Activated CD4-positive, alpha-beta memory T cell treated with anti-CD3 and anti-CD28 coated beads for 36 hours (primary cell): ENCODE measurements at regions of chr7 and their contacts with region 1.

Region 1: GRCh38 chr7:150668472-150668911 is 17.0 kb upstream of the GIMAP2 start:
- DNase-seq: peak; percentile 81
- H3K4me3 Mint-ChIP-seq: peak overlapping the region; percentile 18
- H3K27ac Mint-ChIP-seq: peak overlapping the region; percentile 98
- H3K4me1 Mint-ChIP-seq: peaks cover 82% of the 10 kb centered on the region
- H3K27me3 Mint-ChIP-seq: no peaks in the 10 kb centered on the region

Region 2: GRCh38 chr7:150567169-150567568 is 101.3 kb before region 1 on chr7 and contains the start of gene GIMAP4:
- CTCF ChIA-PET with region 1: interaction called, 7 read pairs
- POLR2A ChIA-PET with region 1: no interaction called
- intact Hi-C with region 1: loop called (anchors 2 kb)
- DNase-seq: peak; percentile 55
- H3K4me3 Mint-ChIP-seq: peak within 1 kb of the TSS; percentile 94
- H3K27ac Mint-ChIP-seq: peak within 1 kb of the TSS; percentile 98
- H3K4me1 Mint-ChIP-seq: peaks cover 65% of the 10 kb centered on the region
- H3K27me3 Mint-ChIP-seq: no peaks in the 10 kb centered on the region
- total RNA-seq, gene GIMAP4: 128 to 140 TPM

Region 3: GRCh38 chr7:150631866-150632864 is 36.3 kb before region 1 on chr7 and contains the start of gene GIMAP6:
- CTCF ChIA-PET with region 1: interaction called, 3 read pairs
- POLR2A ChIA-PET with region 1: interaction called, 3 read pairs
- intact Hi-C with region 1: loop called (anchors 2 kb)
- DNase-seq: peak; percentile 62
- H3K4me3 Mint-ChIP-seq: peak within 1 kb of the TSS; percentile 93
- H3K27ac Mint-ChIP-seq: peak within 1 kb of the TSS; percentile 97
- H3K4me1 Mint-ChIP-seq: peaks cover 76% of the 10 kb centered on the region
- H3K27me3 Mint-ChIP-seq: no peaks in the 10 kb centered on the region
- total RNA-seq, gene GIMAP6: 28.9 to 30.2 TPM

Region 4: GRCh38 chr7:150648353-150649079 is 20.0 kb before region 1 on chr7:
- CTCF ChIA-PET with region 1: no interaction called
- POLR2A ChIA-PET with region 1: no interaction called
- intact Hi-C with region 1: loop called (anchors 2 kb)
- DNase-seq: no peak
- H3K4me3 Mint-ChIP-seq: no peak overlapping the region
- H3K27ac Mint-ChIP-seq: peak overlapping the region; percentile 48
- H3K4me1 Mint-ChIP-seq: peaks cover 30% of the 10 kb centered on the region
- H3K27me3 Mint-ChIP-seq: no peaks in the 10 kb centered on the region

Region 5: GRCh38 chr7:150685219-150686029 is 16.9 kb after region 1 on chr7 and contains the start of gene GIMAP2:
- CTCF ChIA-PET with region 1: interaction called, 10 read pairs
- POLR2A ChIA-PET with region 1: interaction called, 8 read pairs
- intact Hi-C with region 1: loop called (anchors 1 kb)
- DNase-seq: peak; percentile 40
- H3K4me3 Mint-ChIP-seq: peak within 1 kb of the TSS; percentile 98
- H3K27ac Mint-ChIP-seq: peak within 1 kb of the TSS; percentile 99
- H3K4me1 Mint-ChIP-seq: peaks cover 77% of the 10 kb centered on the region
- H3K27me3 Mint-ChIP-seq: no peaks in the 10 kb centered on the region
- total RNA-seq, gene GIMAP2: 38.8 to 44.1 TPM

Region 6: DNA sequence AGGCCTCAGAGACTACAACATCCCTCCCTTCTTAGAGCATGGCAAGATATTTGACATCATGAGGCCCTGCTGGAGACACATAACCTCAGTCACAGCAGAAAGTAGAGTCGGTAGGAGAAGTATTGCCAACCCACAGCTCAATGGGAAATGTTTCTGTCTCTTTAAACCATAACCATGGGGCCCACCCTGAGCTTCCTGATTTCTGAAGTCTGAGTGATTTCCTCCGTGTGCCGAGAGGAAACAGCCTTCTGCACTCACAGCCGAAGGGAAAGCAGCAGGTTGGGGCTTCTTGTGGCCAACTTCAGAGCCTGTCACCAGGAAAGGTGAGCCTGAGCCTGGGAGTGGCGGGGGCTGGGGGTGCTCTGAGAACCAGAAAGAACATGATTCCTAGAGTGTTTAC is 47.9 kb after region 1 on chr7 and contains the start of gene GIMAP1:
- CTCF ChIA-PET with region 1: interaction called, 3 read pairs
- POLR2A ChIA-PET with region 1: interaction called, 6 read pairs
- intact Hi-C with region 1: loop called (anchors 1 kb)
- DNase-seq: peak; percentile 78
- H3K4me3 Mint-ChIP-seq: peak within 1 kb of the TSS; percentile 96
- H3K27ac Mint-ChIP-seq: peak within 1 kb of the TSS; percentile 92
- H3K4me1 Mint-ChIP-seq: peaks cover 50% of the 10 kb centered on the region
- H3K27me3 Mint-ChIP-seq: no peaks in the 10 kb centered on the region
- total RNA-seq, gene GIMAP1: 6.0 to 6.2 TPM

Region 7: GRCh38 chr7:150769768-150770167 is 101.3 kb after region 1 on chr7:
- CTCF ChIA-PET with region 1: no interaction called
- POLR2A ChIA-PET with region 1: no interaction called
- intact Hi-C with region 1: no loop called
- DNase-seq: no peak
- H3K4me3 Mint-ChIP-seq: no peak overlapping the region
- H3K27ac Mint-ChIP-seq: no peak overlapping the region
- H3K4me1 Mint-ChIP-seq: no peaks in the 10 kb centered on the region
- H3K27me3 Mint-ChIP-seq: no peaks in the 10 kb centered on the region